Activated T-helper 1 cell treated with anti-CD3 and anti-CD28 coated beads, Interleukin-12 subunit alpha, Interleukin-12 subunit beta, Interleukin-2, Interleukin-4 antibody, amounts not matched to agents 30 ng/mL and 10 ng/mL and 1 ng/mL, durations not matched to agents 14 hours and 24 hours and 36 hours (primary cell): ENCODE measurements at regions of chr19 and their contacts with region 1.

Region 1: DNA sequence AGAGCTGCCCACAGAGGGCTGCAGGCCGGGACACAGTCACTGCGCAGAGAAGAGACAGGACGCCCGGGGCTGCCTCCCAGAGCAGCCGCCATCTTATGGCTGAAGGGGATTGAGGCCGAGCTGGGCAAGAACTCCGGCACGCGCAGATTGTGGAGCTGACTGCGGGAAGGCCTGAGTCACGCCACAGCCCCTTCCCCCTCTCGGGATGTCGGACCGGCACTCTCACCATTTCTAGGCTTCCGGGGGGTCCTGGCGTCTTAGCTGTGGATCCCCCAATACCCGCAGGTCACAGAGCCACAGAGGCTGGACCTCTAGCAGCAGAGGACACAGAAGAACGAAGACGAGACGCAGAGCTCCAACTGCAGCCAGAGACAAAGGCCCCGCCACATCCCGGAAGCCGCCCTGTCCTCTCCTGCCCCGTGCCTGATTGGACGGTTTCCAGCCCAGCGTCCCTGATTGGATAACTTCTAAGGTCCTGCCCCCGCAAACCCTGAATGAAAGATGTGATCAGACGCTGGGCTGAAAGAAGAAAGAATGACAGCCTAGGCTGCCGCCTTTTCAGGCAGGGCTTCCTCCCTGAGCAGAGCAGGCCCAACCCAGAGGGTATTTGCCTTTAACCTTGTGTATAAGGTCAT is at the start of gene ZNF43:
- DNase-seq: peak; percentile 87
- H3K4me3 Mint-ChIP-seq: peak within 1 kb of the TSS; percentile 98
- H3K27ac Mint-ChIP-seq: peak within 1 kb of the TSS; percentile 98
- H3K4me1 Mint-ChIP-seq: peaks cover 2% of the 10 kb centered on the region
- H3K27me3 Mint-ChIP-seq: peaks cover 2% of the 10 kb centered on the region
- total RNA-seq, gene ZNF43: 29.9 and 30.5 TPM in 2 replicates

Region 2: GRCh38 chr19:20423381-20424197 is 1412.3 kb before region 1 on chr19:
- intact Hi-C with region 1: loop called (anchors 10 kb)
- DNase-seq: peak; percentile 4
- H3K4me3 Mint-ChIP-seq: peak overlapping the region; percentile 94
- H3K27ac Mint-ChIP-seq: peak overlapping the region; percentile 97
- H3K4me1 Mint-ChIP-seq: no peaks in the 10 kb centered on the region
- H3K27me3 Mint-ChIP-seq: no peaks in the 10 kb centered on the region

Region 3: DNA sequence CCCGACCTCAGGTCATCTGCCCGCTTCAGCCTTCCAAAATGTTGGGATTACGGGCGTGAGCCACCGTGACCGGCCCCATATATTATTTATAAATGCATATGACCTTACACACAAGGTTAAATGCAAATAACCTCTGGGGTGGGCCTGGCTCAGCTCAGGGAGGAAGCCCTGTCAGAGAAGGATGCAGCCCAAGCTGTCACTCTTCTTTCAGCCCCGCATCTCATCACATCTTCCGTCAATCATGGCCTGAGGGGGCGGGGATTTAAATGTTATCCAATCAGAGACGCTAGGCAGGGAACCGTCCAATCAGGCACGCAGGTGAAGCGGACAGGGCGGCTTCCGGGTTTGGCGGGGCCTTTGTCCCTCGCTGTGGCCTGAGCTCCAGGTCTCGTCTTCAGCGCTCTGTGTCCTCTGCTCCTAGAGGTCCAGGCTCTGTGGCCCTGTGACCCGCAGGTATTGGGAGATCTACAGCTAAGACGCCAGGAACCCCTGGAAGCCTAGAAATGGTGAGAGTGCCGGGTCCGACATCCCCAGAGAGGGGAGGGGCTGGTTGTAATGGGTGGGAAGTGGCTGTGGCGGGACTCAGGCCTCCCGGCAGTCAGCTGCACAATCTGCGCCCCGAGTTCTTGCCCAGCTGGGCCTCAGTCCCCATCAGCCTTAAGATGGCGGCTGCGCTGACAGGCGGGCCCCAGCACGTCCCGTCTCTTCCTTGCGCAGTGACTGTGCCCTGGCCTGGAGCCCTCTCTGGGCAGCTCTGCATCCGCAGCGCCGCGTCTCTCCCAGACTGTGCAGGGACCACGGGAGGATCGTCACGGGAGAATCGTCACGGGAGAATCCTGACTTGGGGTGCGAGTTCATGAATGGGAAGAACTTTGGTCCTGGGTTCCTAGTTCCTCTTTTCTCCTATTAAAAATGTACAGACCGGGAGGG is 815.4 kb before region 1 on chr19 and contains the start of gene ZNF430:
- intact Hi-C with region 1: loop called (anchors 10 kb)
- DNase-seq: peak; percentile 93
- H3K4me3 Mint-ChIP-seq: peak within 1 kb of the TSS; percentile 99
- H3K27ac Mint-ChIP-seq: peak within 1 kb of the TSS; percentile 98
- H3K4me1 Mint-ChIP-seq: peaks cover 26% of the 10 kb centered on the region
- H3K27me3 Mint-ChIP-seq: peaks cover 2% of the 10 kb centered on the region
- total RNA-seq, gene ZNF430: 20.3 and 21.5 TPM in 2 replicates

Region 4: DNA sequence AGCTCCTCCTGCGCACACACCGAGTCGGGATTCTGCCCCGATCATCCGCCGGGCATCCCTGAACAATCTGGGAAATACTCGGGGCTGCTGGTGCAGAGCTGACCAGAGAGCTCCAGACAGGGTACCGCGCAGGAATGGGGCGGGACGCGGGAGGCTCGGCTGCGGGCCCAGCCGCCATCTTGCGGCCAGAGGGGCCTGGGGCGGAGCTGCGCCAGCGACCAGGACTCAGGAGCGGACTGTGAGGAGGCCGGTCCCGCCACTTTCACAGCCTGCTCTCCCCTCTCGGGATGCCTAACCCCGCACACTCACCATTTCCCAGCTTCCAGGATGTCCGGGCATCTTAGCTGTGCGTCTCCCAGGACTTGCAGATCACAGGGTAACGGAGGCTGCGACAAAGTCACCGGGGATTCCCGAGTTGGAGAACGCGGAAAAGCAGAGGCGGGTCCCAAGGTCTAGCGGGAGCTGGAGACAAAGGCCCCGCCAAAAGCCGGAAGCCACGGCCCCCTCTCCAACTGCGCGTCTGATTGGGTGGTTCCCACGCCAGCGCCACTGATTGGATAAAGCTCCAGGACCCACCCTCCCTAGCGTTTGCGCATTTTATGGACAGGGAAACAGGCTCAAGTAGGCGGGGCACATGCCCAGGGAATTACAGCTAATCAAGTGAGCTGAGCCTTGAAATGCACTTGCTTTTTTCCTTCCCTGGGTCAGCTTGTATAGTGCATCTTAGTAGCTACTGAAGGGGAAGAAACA is 15.8 kb after region 1 on chr19:
- intact Hi-C with region 1: loop called (anchors 1 kb)
- DNase-seq: peak; percentile 80
- H3K4me3 Mint-ChIP-seq: peak overlapping the region; percentile 90
- H3K27ac Mint-ChIP-seq: peak overlapping the region; percentile 87
- H3K4me1 Mint-ChIP-seq: peaks cover 21% of the 10 kb centered on the region
- H3K27me3 Mint-ChIP-seq: no peaks in the 10 kb centered on the region

Region 5: DNA sequence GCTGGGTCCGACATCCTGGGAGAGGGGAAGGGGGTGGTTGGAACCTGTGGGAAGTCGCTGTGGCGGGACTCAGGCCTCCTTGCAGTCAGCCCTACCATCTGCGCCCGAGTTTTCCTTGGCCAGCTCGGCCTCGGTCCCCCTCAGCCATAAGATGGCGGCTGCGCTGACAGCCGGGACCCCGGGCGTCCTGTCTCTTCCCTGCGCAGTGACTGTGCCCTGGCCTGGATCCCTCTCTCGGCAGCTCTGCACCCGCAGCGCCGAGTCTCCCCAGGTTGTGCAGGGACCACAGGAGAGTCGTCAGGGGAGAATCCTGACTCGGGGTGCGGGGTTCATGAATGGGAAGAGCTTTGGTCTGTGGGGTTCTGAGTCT is 216.7 kb after region 1 on chr19:
- intact Hi-C with region 1: loop called (anchors 5 kb)
- DNase-seq: no peak
- H3K4me3 Mint-ChIP-seq: peak overlapping the region; percentile 92
- H3K27ac Mint-ChIP-seq: peak overlapping the region; percentile 57
- H3K4me1 Mint-ChIP-seq: no peaks in the 10 kb centered on the region
- H3K27me3 Mint-ChIP-seq: no peaks in the 10 kb centered on the region